Activated naive CD4-positive, alpha-beta T cell treated with anti-CD3 and anti-CD28 coated beads for 36 hours (primary cell): ENCODE measurements at regions of chr4 and their contacts with region 1.

Region 1: DNA sequence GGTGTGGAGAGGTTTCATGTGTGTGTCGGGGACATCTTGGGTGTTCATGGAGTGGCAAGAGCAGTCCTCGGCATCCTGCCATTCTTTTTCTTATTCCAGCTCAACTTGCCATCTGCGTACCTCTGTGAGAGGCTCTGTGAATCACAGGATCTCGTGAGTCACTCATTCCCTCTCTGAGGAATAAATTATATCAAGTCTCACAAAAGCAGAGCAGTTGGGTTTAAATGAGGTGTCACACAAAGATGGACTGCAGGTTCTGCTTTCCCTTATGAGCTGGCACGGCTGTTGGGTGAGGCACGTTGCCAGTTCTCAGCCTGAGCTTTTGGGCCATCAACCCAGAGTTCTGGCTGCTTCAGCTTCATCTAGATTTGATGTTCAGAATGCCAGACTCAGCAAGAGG is 6.8 kb upstream of the OCIAD2 start:
- DNase-seq: no peak
- H3K4me3 Mint-ChIP-seq: no peak overlapping the region
- H3K27ac Mint-ChIP-seq: no peak overlapping the region
- H3K4me1 Mint-ChIP-seq: peaks cover 13% of the 10 kb centered on the region
- H3K27me3 Mint-ChIP-seq: no peaks in the 10 kb centered on the region

Region 2: DNA sequence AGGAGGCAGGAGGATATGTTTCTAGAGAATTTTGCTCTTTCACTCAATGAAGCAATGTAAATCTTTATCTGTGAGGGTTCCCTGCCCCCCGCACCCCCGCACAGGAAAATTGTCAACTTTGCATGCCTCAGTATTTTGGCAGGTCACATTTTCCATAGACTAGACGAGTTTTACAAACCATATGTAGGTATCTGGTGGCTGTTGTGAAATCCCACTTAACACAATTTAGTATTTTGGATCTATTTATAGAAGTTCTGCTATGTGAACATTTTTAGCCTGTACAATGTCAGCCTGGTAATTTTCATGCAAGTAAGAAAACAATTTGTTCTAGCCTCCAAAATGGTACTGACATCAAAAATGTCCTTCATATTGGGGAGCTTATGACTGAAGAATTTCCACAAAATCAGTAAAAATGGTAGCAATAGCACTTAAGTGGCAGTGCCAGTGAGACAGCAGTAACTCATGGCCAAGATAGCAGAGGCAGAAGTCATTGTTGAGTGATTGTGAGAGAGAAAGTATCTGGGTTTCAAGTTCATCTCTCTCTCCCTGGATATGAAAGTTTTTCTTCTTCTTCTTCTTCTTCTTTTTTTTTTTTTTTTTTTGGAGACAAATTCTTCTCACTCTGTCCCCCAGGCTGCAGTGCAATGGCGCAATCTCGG is 120.9 kb before region 1 on chr4:
- CTCF ChIA-PET with region 1: no interaction called
- intact Hi-C with region 1: no loop called
- DNase-seq: no peak
- H3K4me3 Mint-ChIP-seq: no peak overlapping the region
- H3K27ac Mint-ChIP-seq: no peak overlapping the region
- H3K4me1 Mint-ChIP-seq: peaks cover 8% of the 10 kb centered on the region
- H3K27me3 Mint-ChIP-seq: no peaks in the 10 kb centered on the region

Region 3: DNA sequence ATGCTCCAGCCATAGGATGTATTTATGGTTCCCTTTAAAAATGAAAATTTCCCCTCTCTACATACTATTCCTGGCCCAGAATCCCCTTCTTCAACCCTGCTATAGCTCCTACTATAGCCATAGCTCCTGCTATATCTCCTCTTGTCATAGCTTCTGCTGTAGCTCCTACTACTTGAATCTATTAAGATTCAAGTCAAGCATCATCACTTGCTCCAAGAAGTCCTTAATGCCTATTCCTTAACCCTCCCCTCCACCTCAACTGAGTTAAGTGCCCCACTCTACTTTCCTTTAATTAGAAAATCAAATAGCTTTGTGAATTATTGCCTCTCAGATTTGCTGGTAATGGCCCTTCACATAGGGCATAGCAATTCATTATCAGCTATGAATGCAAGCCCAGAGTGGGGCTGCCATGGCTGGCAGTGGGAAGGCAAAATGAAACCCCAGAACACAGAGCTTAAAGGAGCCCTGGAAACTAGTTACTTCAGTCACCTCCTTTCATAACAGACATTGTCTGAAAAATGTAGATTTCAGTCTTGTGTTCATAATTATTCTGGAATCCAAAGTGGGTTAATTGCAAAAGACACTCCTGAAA is 22.2 kb before region 1 on chr4:
- CTCF ChIA-PET with region 1: no interaction called
- intact Hi-C with region 1: no loop called
- DNase-seq: no peak
- H3K4me3 Mint-ChIP-seq: no peak overlapping the region
- H3K27ac Mint-ChIP-seq: no peak overlapping the region
- H3K4me1 Mint-ChIP-seq: no peaks in the 10 kb centered on the region
- H3K27me3 Mint-ChIP-seq: no peaks in the 10 kb centered on the region

Region 4: GRCh38 chr4:48944756-48945241 is 31.5 kb after region 1 on chr4:
- CTCF ChIA-PET with region 1: interaction called, 15 read pairs
- intact Hi-C with region 1: loop called (anchors 1 kb)
- DNase-seq: peak; percentile 81
- H3K4me3 Mint-ChIP-seq: no peak overlapping the region
- H3K27ac Mint-ChIP-seq: no peak overlapping the region
- H3K4me1 Mint-ChIP-seq: peaks cover 22% of the 10 kb centered on the region
- H3K27me3 Mint-ChIP-seq: no peaks in the 10 kb centered on the region